PC-9 (cell line): ENCODE measurements at regions of chr6 and their contacts with region 1.

Region 1: GRCh38 chr6:4055420-4056041 is 23.4 kb downstream of the FAM217A start:
- DNase-seq: peak; percentile 29 to 43
- H3K4me3 ChIP-seq: no peak overlapping the region
- H3K27ac ChIP-seq: no peak overlapping the region
- H3K4me1 ChIP-seq: peaks cover 17% of the 10 kb centered on the region
- H3K27me3 ChIP-seq: no peaks in the 10 kb centered on the region
- CTCF ChIP-seq: peak; percentile 59

Region 2: DNA sequence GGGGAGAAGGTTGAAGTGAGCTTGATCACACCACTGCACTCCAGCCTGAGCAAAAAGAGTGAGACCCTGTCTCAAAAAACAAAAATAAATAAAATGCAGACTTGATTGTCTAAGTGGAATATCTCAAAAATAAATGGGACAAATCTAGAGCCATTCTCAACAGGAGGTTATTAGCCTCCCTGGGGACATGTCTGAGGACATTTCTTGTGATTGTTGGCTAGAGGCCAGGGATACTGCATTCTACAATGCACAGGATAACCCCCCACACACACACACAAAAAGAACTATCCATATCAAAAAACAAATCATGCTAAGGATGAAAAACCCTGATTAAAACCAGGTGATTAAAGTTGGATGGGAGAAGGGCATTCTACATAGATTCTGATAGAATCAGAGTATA is 14.1 kb before region 1 on chr6:
- CTCF ChIA-PET with region 1: no interaction called
- POLR2A ChIA-PET with region 1: no interaction called
- intact Hi-C with region 1: loop called (anchors 2 kb)
- DNase-seq: no peak
- H3K4me3 ChIP-seq: no peak overlapping the region
- H3K27ac ChIP-seq: no peak overlapping the region
- H3K4me1 ChIP-seq: no peaks in the 10 kb centered on the region
- H3K27me3 ChIP-seq: no peaks in the 10 kb centered on the region
- CTCF ChIP-seq: no peak

Region 3: GRCh38 chr6:4155848-4156466 is 100.4 kb after region 1 on chr6:
- CTCF ChIA-PET with region 1: interaction called, 4 read pairs
- POLR2A ChIA-PET with region 1: no interaction called
- intact Hi-C with region 1: loop called (anchors 1 kb)
- DNase-seq: peak; percentile 60 to 61
- H3K4me3 ChIP-seq: no peak overlapping the region
- H3K27ac ChIP-seq: no peak overlapping the region
- H3K4me1 ChIP-seq: no peaks in the 10 kb centered on the region
- H3K27me3 ChIP-seq: no peaks in the 10 kb centered on the region
- CTCF ChIP-seq: peak; percentile 80

Region 4: GRCh38 chr6:4210629-4211423 is 155.3 kb after region 1 on chr6:
- CTCF ChIA-PET with region 1: no interaction called
- POLR2A ChIA-PET with region 1: no interaction called
- intact Hi-C with region 1: loop called (anchors 2 kb)
- DNase-seq: peak in 1 of 2 experiments; percentile 48
- H3K4me3 ChIP-seq: no peak overlapping the region
- H3K27ac ChIP-seq: no peak overlapping the region
- H3K4me1 ChIP-seq: no peaks in the 10 kb centered on the region
- H3K27me3 ChIP-seq: no peaks in the 10 kb centered on the region
- CTCF ChIP-seq: peak; percentile 73

Region 5: DNA sequence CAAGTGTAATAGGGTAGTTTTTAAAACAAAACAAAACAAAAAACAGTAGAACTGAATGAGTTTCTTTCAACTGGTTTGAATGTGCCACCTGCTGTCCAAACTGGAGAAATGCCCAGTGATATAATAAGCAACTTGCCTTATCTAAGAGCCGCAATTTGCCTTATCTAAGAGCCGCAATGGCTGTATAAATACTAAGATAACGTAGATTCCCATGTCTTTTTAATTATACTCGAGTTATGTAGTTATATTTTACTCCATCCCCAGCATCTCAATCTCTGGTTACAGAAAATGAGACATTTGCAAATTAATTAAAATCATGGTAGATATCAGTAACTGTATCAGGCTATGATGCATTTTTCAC is 881.1 kb after region 1 on chr6:
- CTCF ChIA-PET with region 1: no interaction called
- POLR2A ChIA-PET with region 1: no interaction called
- intact Hi-C with region 1: loop called (anchors 5 kb)
- DNase-seq: no peak
- H3K4me3 ChIP-seq: no peak overlapping the region
- H3K27ac ChIP-seq: no peak overlapping the region
- H3K4me1 ChIP-seq: peaks cover 24% of the 10 kb centered on the region
- H3K27me3 ChIP-seq: no peaks in the 10 kb centered on the region
- CTCF ChIP-seq: peak; percentile 71

Region 6: DNA sequence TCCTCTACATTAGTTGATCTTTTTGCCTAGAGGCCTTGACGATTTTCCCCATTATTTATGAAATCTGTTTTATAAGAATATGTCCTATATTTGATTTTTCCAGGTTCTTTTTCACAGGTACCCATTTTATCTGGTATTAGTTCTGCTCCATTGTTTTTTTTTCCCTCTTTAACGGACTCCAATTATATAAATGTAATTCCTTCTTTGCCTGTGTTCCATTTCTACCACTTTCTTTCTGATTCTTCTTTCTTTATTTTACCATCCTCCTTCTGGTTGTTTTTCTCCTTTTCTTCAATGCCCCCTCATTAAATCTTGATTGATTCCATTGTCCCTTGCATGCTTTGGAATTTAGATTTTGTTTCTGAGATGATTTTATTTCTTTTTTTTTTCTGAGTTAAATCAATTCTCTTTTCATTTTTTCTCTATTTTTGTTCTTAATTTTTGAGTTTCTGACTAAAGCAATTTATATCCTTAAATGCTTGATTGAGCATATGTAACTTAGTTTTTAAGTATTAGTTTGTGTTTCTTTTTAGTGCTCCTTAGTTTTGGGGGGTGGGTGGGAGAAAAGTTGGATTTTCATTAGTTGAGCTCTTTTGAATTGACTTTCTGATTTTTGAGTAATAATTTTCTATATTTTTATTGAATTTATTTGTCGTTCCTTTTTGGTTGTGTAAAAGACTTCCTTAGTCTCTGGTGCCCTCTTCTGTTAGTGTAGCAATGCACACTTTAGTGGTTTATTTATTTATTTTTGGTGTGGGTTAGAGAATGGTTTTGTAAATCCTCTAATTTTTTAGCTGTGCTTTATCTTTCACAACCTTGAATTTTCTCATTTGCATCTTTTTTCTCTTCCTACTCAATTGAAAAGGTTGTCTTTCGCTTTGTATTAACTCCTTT is 1346.6 kb after region 1 on chr6:
- CTCF ChIA-PET with region 1: no interaction called
- POLR2A ChIA-PET with region 1: no interaction called
- intact Hi-C with region 1: loop called (anchors 5 kb)
- DNase-seq: no peak
- H3K4me3 ChIP-seq: no peak overlapping the region
- H3K27ac ChIP-seq: no peak overlapping the region
- H3K4me1 ChIP-seq: no peaks in the 10 kb centered on the region
- H3K27me3 ChIP-seq: no peaks in the 10 kb centered on the region
- CTCF ChIP-seq: peak; percentile 66